CD4-positive, alpha-beta memory T cell (primary cell): ENCODE measurements at regions of chr5 and their contacts with region 1.

Region 1: DNA sequence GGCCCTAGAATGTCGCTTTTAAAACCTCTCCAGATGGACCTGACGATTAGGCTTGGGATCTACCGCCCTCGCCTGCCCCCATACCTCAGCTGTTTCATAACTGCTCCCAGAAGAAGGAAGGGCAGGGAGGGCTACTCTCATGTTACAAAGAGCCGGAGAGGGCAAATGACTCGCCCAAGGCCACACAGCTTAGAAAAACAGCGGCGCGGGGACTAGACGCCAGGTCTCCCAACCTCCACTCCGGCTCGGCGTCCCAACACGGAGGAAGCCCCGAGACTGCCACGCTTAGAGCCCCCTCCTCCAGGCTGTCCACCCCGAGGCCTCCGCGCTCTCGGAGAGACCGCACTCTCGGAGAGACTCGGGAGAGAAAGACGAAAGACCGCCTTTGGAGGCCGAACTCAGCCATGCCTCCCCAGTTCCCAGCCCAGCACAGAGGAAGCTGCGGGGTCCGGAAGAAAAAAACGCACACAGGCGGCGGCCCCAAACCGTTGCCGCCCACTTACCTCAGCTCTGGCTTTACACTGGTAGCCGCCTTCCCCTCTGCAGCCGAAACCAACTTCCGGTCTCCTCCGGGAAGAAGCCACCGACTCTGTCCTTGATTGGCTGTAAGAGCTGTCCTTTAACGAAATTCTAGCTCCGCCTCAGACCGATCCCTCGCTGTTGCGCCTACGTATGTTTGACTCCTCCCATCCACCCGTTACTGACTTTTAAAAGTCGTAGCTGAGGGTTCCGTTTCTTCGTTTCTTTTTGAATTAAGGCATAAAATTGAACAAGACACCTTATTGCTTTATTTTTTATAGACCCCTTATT is at the start of gene MED7:
- DNase-seq: peak; percentile 94 to 98 (median 97)
- H3K4me3 ChIP-seq: peak within 1 kb of the TSS; percentile 92 to 94
- H3K4me3 Mint-ChIP-seq: peak within 1 kb of the TSS; percentile 94 to 100 (median 98)
- H3K27ac ChIP-seq: peak within 1 kb of the TSS; percentile 98
- H3K27ac Mint-ChIP-seq: peak within 1 kb of the TSS; percentile 94 to 100 (median 99)
- H3K4me1 ChIP-seq: peaks cover 28% of the 10 kb centered on the region
- H3K4me1 Mint-ChIP-seq: peaks cover 29 to 61% (median 39%) of the 10 kb centered on the region in 4 donors
- H3K27me3 ChIP-seq: no peaks in the 10 kb centered on the region
- H3K27me3 Mint-ChIP-seq: no peaks in the 10 kb centered on the region
- total RNA-seq, gene MED7: 18.9 to 20.3 TPM

Region 2: DNA sequence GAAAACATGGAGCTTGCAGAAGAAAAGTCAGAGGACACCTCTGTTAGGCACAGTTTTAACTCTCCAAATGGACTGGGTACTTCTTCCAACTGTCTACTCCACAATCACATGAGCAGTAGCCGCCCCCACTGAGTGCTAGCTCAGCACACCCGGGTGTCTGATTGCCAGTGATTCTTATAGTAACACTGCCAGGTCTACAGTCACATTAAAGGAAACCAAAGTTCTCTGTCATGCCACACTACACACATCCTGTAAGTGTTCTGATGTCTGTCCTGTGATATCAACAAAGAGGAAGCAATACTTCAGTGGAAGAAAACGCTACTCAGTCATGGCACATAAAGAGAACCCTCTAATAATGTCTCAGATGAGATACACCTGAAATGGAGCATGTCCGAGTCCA is 33.5 kb before region 1 on chr5 and contains the start of gene HAVCR2:
- CTCF ChIA-PET with region 1: interaction called, 3 read pairs
- POLR2A ChIA-PET with region 1: interaction called, 33 read pairs
- intact Hi-C with region 1: no loop called
- DNase-seq: peak; percentile 47 to 63 (median 54)
- H3K4me3 ChIP-seq: peak within 1 kb of the TSS; percentile 7 to 25
- H3K4me3 Mint-ChIP-seq: peak within 1 kb of the TSS; percentile 72 to 90 (median 86)
- H3K27ac ChIP-seq: peak within 1 kb of the TSS; percentile 12
- H3K27ac Mint-ChIP-seq: peak within 1 kb of the TSS; percentile 75 to 96 (median 92)
- H3K4me1 ChIP-seq: peaks cover 27% of the 10 kb centered on the region
- H3K4me1 Mint-ChIP-seq: peaks cover 20 to 49% (median 31%) of the 10 kb centered on the region in 4 donors
- H3K27me3 ChIP-seq: no peaks in the 10 kb centered on the region
- H3K27me3 Mint-ChIP-seq: no peaks in the 10 kb centered on the region
- total RNA-seq, gene HAVCR2: 2.7 to 4.5 TPM

Region 3: GRCh38 chr5:157180374-157181264 is 38.1 kb after region 1 on chr5 and contains the start of gene ITK:
- CTCF ChIA-PET with region 1: interaction called, 22 read pairs
- POLR2A ChIA-PET with region 1: interaction called, 51 read pairs
- intact Hi-C with region 1: no loop called
- DNase-seq: peak; percentile 77 to 85 (median 81)
- H3K4me3 ChIP-seq: peak within 1 kb of the TSS; percentile 83 to 99
- H3K4me3 Mint-ChIP-seq: peak within 1 kb of the TSS; percentile 97 to 100 (median 99)
- H3K27ac ChIP-seq: peak within 1 kb of the TSS; percentile 77
- H3K27ac Mint-ChIP-seq: peak within 1 kb of the TSS; percentile 84 to 99 (median 97)
- H3K4me1 ChIP-seq: peaks cover 47% of the 10 kb centered on the region
- H3K4me1 Mint-ChIP-seq: peaks cover 28 to 67% (median 43%) of the 10 kb centered on the region in 4 donors
- H3K27me3 ChIP-seq: no peaks in the 10 kb centered on the region
- H3K27me3 Mint-ChIP-seq: no peaks in the 10 kb centered on the region
- total RNA-seq, gene ITK: 398 to 421 TPM

Region 4: GRCh38 chr5:157212307-157212706 is 69.8 kb after region 1 on chr5:
- CTCF ChIA-PET with region 1: interaction called, 35 read pairs
- POLR2A ChIA-PET with region 1: interaction called, 24 read pairs
- intact Hi-C with region 1: no loop called
- DNase-seq: no peak
- H3K4me3 ChIP-seq: no peak overlapping the region
- H3K4me3 Mint-ChIP-seq: peak overlapping the region in 6 of 8 donors; percentile 9 to 83 (median 66)
- H3K27ac ChIP-seq: peak overlapping the region; percentile 45
- H3K27ac Mint-ChIP-seq: peak overlapping the region; percentile 74 to 94 (median 83)
- H3K4me1 ChIP-seq: peaks cover 98% of the 10 kb centered on the region
- H3K4me1 Mint-ChIP-seq: peaks cover 77 to 100% (median 87%) of the 10 kb centered on the region in 4 donors
- H3K27me3 ChIP-seq: no peaks in the 10 kb centered on the region
- H3K27me3 Mint-ChIP-seq: no peaks in the 10 kb centered on the region

Region 5: GRCh38 chr5:157259699-157260098 is 117.2 kb after region 1 on chr5:
- CTCF ChIA-PET with region 1: interaction called, 99 read pairs
- POLR2A ChIA-PET with region 1: interaction called, 26 read pairs
- intact Hi-C with region 1: no loop called
- DNase-seq: no peak
- H3K4me3 ChIP-seq: no peak overlapping the region
- H3K4me3 Mint-ChIP-seq: peak overlapping the region in 4 of 8 donors; percentile 0 to 57 (median 20)
- H3K27ac ChIP-seq: no peak overlapping the region
- H3K27ac Mint-ChIP-seq: peak overlapping the region in 6 of 7 donors; percentile 3 to 76 (median 50)
- H3K4me1 ChIP-seq: peaks cover 61% of the 10 kb centered on the region
- H3K4me1 Mint-ChIP-seq: peaks cover 59 to 84% (median 76%) of the 10 kb centered on the region in 4 donors
- H3K27me3 ChIP-seq: no peaks in the 10 kb centered on the region
- H3K27me3 Mint-ChIP-seq: no peaks in the 10 kb centered on the region

Region 6: GRCh38 chr5:157312492-157312891 is 170.0 kb after region 1 on chr5:
- CTCF ChIA-PET with region 1: interaction called, 30 read pairs
- POLR2A ChIA-PET with region 1: interaction called, 22 read pairs
- intact Hi-C with region 1: no loop called
- DNase-seq: peak; percentile 55 to 71 (median 61)
- H3K4me3 ChIP-seq: no peak overlapping the region
- H3K4me3 Mint-ChIP-seq: peak overlapping the region in 1 of 8 donors; percentile 2
- H3K27ac ChIP-seq: no peak overlapping the region
- H3K27ac Mint-ChIP-seq: peak overlapping the region; percentile 24 to 94 (median 77)
- H3K4me1 ChIP-seq: peaks cover 33% of the 10 kb centered on the region
- H3K4me1 Mint-ChIP-seq: peaks cover 23 to 42% (median 34%) of the 10 kb centered on the region in 4 donors
- H3K27me3 ChIP-seq: no peaks in the 10 kb centered on the region
- H3K27me3 Mint-ChIP-seq: no peaks in the 10 kb centered on the region

Region 7: DNA sequence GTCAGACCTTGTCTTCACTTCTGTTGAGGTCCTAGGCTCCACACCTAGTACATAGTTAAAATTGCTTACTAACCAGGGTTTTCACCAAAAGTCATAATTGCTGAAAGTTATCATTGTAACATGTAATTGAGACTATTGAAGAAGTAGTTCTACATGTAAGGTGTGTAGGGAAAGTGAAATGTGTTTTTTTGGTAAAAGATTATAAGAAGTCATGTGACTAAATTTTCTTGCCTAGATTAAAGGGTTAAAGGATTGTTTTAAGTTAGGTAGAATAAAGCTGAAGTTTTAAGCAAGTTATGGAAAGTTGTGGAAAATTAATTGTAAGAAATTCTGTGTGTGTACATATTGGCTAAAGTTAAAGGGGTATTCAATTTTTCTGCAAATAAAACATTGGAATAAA is 554.9 kb after region 1 on chr5:
- CTCF ChIA-PET with region 1: no interaction called
- POLR2A ChIA-PET with region 1: no interaction called
- intact Hi-C with region 1: no loop called
- DNase-seq: no peak
- H3K4me3 ChIP-seq: no peak overlapping the region
- H3K4me3 Mint-ChIP-seq: no peak overlapping the region
- H3K27ac ChIP-seq: no peak overlapping the region
- H3K27ac Mint-ChIP-seq: no peak overlapping the region
- H3K4me1 ChIP-seq: no peaks in the 10 kb centered on the region
- H3K4me1 Mint-ChIP-seq: no peaks in the 10 kb centered on the region
- H3K27me3 ChIP-seq: no peaks in the 10 kb centered on the region
- H3K27me3 Mint-ChIP-seq: no peaks in the 10 kb centered on the region